ENCODE measurements at regions of chr4 and their contacts with region 1.

Region 1: GRCh38 chr4:48212165-48212564 is 57.5 kb downstream of the TEC start:
- DNase-seq: no peak
- ATAC-seq: peak; percentile 85
- H3K4me3 ChIP-seq: peak overlapping the region; percentile 54; the same call in 1 of the 2 replicates
- H3K27ac ChIP-seq: peak overlapping the region; percentile 90
- H3K4me1 ChIP-seq: peaks cover 43% of the 10 kb centered on the region
- H3K27me3 ChIP-seq: no peaks in the 10 kb centered on the region
- CTCF ChIP-seq: no peak
- EP300 ChIP-seq: peak; percentile 60 to 72; a peak in 3 of 4 replicates
- POLR2A ChIP-seq: peak; percentile 37; the same call in 1 of the 2 replicates
- RAD21 ChIP-seq: no peak

Region 2: DNA sequence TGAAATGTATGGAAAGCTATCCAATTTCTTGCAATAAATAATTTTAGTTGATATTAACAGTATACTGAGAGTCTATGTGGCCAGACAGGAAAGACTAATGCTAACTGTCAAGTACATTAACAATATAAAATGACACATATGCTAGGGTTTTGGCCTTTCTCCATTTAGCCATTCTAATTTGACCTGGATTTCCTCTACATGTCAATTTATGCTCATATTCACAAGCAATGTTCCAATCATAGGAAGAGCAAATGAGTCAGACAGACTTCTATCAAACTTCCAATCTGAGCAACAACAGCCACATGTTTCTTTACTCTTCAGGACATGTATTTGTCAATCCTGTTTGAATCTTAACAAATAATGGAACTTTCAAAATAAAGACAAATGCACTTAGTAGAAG is 427.9 kb before region 1 on chr4:
- CTCF ChIA-PET with region 1: no interaction called
- POLR2A ChIA-PET with region 1: no interaction called
- RAD21 ChIA-PET with region 1: no interaction called
- SMC1A ChIA-PET with region 1: no interaction called
- in situ Hi-C with region 1: no loop called
- intact Hi-C with region 1: no loop called
- DNase-seq: no peak
- ATAC-seq: no peak
- H3K4me3 ChIP-seq: no peak overlapping the region
- H3K27ac ChIP-seq: no peak overlapping the region
- H3K4me1 ChIP-seq: peaks cover 4% of the 10 kb centered on the region; the same call in 1 of the 2 replicates
- H3K27me3 ChIP-seq: no peaks in the 10 kb centered on the region
- CTCF ChIP-seq: no peak
- EP300 ChIP-seq: no peak
- POLR2A ChIP-seq: no peak
- RAD21 ChIP-seq: no peak

Region 3: GRCh38 chr4:48173056-48173991 is 38.8 kb before region 1 on chr4:
- CTCF ChIA-PET with region 1: interaction called, 3 read pairs
- POLR2A ChIA-PET with region 1: interaction called, 3 read pairs
- RAD21 ChIA-PET with region 1: interaction called, 18 read pairs
- SMC1A ChIA-PET with region 1: interaction called, 4 read pairs
- in situ Hi-C with region 1: no loop called
- intact Hi-C with region 1: no loop called
- DNase-seq: peak; percentile 55
- ATAC-seq: peak; percentile 85
- H3K4me3 ChIP-seq: no peak overlapping the region
- H3K27ac ChIP-seq: peak overlapping the region; percentile 59
- H3K4me1 ChIP-seq: peaks cover 36% of the 10 kb centered on the region
- H3K27me3 ChIP-seq: no peaks in the 10 kb centered on the region
- CTCF ChIP-seq: no peak
- EP300 ChIP-seq: no peak; a peak in 1 of 4 replicates
- POLR2A ChIP-seq: no peak
- RAD21 ChIP-seq: no peak

Region 4: GRCh38 chr4:48227659-48228058 is 15.5 kb after region 1 on chr4:
- CTCF ChIA-PET with region 1: interaction called, 5 read pairs
- POLR2A ChIA-PET with region 1: interaction called, 20 read pairs
- RAD21 ChIA-PET with region 1: interaction called, 4 read pairs
- SMC1A ChIA-PET with region 1: interaction called, 124 read pairs
- in situ Hi-C with region 1: no loop called
- intact Hi-C with region 1: no loop called
- DNase-seq: no peak
- ATAC-seq: peak; percentile 73
- H3K4me3 ChIP-seq: no peak overlapping the region
- H3K27ac ChIP-seq: no peak overlapping the region
- H3K4me1 ChIP-seq: peaks cover 3% of the 10 kb centered on the region; the same call in 1 of the 2 replicates
- H3K27me3 ChIP-seq: no peaks in the 10 kb centered on the region
- CTCF ChIP-seq: no peak
- EP300 ChIP-seq: no peak
- POLR2A ChIP-seq: no peak
- RAD21 ChIP-seq: no peak

Region 5: DNA sequence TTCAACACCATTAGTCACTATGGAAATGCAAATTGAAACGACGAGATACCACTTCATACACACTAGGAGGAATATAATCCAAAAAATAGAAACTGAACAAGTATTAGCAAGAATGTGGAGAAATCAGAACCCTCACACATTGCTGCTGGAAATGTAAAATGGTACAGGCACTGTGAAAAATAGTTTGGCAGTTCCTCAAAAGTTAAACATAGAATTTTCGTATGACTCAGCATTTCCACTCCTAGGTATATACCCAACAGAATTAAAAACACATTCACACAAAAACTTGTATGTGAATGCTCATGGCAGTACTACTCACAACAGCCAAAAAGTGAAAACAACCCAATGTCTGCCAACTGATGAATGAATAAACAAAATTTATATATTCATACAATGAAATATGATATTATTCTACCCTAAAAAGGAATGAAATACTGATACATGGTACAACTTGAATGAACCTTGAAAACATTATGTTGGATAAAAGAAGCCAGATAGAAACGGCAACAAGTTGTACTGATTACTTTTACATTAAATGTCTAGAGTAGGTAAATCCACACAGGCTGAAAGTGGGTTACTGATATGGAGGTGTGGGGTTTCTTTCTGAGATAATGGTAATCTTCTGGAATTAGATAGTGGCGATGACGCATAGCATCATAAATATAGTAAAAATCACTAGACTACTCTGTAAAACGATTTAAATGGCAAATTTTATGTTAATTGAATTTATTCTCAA is 35.1 kb after region 1 on chr4:
- CTCF ChIA-PET with region 1: interaction called, 6 read pairs
- POLR2A ChIA-PET with region 1: interaction called, 8 read pairs
- RAD21 ChIA-PET with region 1: interaction called, 15 read pairs
- SMC1A ChIA-PET with region 1: interaction called, 30 read pairs
- in situ Hi-C with region 1: no loop called
- intact Hi-C with region 1: no loop called
- DNase-seq: peak; percentile 51
- ATAC-seq: peak; percentile 74
- H3K4me3 ChIP-seq: 0 out of 2 replicates have a peak overlapping the region, but pooled peaks have one; percentile 25
- H3K27ac ChIP-seq: peak overlapping the region; percentile 79
- H3K4me1 ChIP-seq: peaks cover 28% of the 10 kb centered on the region
- H3K27me3 ChIP-seq: no peaks in the 10 kb centered on the region
- CTCF ChIP-seq: no peak
- EP300 ChIP-seq: no peak
- POLR2A ChIP-seq: no peak
- RAD21 ChIP-seq: no peak

Region 6: GRCh38 chr4:48262926-48263325 is 50.8 kb after region 1 on chr4:
- CTCF ChIA-PET with region 1: interaction called, 5 read pairs
- POLR2A ChIA-PET with region 1: interaction called, 8 read pairs
- RAD21 ChIA-PET with region 1: interaction called, 19 read pairs
- SMC1A ChIA-PET with region 1: interaction called, 23 read pairs
- in situ Hi-C with region 1: no loop called
- intact Hi-C with region 1: no loop called
- DNase-seq: no peak
- ATAC-seq: no peak
- H3K4me3 ChIP-seq: no peak overlapping the region
- H3K27ac ChIP-seq: no peak overlapping the region
- H3K4me1 ChIP-seq: peaks cover 27% of the 10 kb centered on the region
- H3K27me3 ChIP-seq: no peaks in the 10 kb centered on the region
- CTCF ChIP-seq: no peak
- EP300 ChIP-seq: no peak
- POLR2A ChIP-seq: no peak
- RAD21 ChIP-seq: no peak

Region 7: GRCh38 chr4:48420144-48420543 is 208.0 kb after region 1 on chr4:
- CTCF ChIA-PET with region 1: no interaction called
- POLR2A ChIA-PET with region 1: no interaction called
- RAD21 ChIA-PET with region 1: no interaction called
- SMC1A ChIA-PET with region 1: no interaction called
- in situ Hi-C with region 1: no loop called
- intact Hi-C with region 1: no loop called
- DNase-seq: no peak
- ATAC-seq: no peak
- H3K4me3 ChIP-seq: no peak overlapping the region
- H3K27ac ChIP-seq: no peak overlapping the region
- H3K4me1 ChIP-seq: no peaks in the 10 kb centered on the region
- H3K27me3 ChIP-seq: no peaks in the 10 kb centered on the region
- CTCF ChIP-seq: no peak
- EP300 ChIP-seq: no peak
- POLR2A ChIP-seq: no peak
- RAD21 ChIP-seq: no peak